Transverse colon (tissue), 4 donors: ENCODE measurements at regions of chr2 and their contacts with region 1.

Region 1: GRCh38 chr2:43773876-43774613 is at the start of gene DYNC2LI1:
- DNase-seq: peak; percentile 93
- H3K4me3 ChIP-seq: peak within 1 kb of the TSS; percentile 62 to 79 (median 66)
- H3K27ac ChIP-seq: peak within 1 kb of the TSS; percentile 91 to 95 (median 92)
- H3K4me1 ChIP-seq: peaks cover 0 to 13% (median 5%) of the 10 kb centered on the region in 4 donors
- H3K27me3 ChIP-seq: no peaks in the 10 kb centered on the region
- CTCF ChIP-seq: no peak
- EP300 ChIP-seq: no peak
- POLR2A ChIP-seq: peak; percentile 73
- total RNA-seq, gene DYNC2LI1: 6.6 to 26.9 (median 20.2) TPM

Region 2: DNA sequence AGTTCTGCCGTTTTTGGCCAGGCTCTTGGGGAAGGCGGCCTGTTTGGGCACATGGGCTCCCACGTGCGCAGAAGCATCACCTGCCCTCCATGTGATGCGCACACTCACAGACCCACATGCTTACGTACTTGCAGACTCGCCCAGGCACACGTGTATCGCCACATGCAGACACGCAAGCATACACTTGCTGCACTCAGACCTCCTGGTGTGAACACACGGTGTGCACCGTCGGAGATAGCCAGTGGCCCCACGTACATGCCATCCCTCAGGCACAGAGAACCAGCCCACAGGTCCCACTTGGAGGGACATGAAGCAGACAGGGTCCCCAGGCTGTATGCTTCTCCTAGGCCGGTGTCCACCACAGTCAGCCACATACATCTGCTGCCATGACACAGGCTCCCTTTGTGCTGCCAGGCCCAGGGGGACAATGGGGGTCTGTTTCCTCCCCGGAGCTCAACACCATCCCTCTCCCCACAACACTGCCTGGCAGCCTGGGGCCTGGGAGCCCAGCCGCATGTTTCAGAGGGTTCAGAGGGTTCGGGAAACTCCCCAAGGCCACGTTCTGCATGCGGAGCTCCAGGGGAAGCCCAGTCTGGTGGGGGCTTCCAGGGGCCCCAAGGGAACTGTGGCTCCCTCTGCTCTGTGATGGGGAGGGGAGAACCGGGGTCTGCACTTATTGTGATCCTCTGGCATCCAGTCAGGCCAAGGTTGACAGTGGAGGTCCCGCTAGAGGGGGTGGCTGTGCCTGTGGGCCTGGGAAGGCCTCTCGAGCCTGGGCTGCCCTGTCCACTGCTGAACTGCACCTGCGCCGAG is 773.6 kb before region 1 on chr2:
- in situ Hi-C with region 1: no loop called
- intact Hi-C with region 1: loop called (anchors 10 kb)
- DNase-seq: no peak
- H3K4me3 ChIP-seq: no peak overlapping the region
- H3K27ac ChIP-seq: peak overlapping the region; percentile 72 to 86 (median 78)
- H3K4me1 ChIP-seq: peaks cover 6 to 44% (median 38%) of the 10 kb centered on the region in 4 donors
- H3K27me3 ChIP-seq: no peaks in the 10 kb centered on the region
- CTCF ChIP-seq: no peak
- EP300 ChIP-seq: no peak
- POLR2A ChIP-seq: no peak

Region 3: DNA sequence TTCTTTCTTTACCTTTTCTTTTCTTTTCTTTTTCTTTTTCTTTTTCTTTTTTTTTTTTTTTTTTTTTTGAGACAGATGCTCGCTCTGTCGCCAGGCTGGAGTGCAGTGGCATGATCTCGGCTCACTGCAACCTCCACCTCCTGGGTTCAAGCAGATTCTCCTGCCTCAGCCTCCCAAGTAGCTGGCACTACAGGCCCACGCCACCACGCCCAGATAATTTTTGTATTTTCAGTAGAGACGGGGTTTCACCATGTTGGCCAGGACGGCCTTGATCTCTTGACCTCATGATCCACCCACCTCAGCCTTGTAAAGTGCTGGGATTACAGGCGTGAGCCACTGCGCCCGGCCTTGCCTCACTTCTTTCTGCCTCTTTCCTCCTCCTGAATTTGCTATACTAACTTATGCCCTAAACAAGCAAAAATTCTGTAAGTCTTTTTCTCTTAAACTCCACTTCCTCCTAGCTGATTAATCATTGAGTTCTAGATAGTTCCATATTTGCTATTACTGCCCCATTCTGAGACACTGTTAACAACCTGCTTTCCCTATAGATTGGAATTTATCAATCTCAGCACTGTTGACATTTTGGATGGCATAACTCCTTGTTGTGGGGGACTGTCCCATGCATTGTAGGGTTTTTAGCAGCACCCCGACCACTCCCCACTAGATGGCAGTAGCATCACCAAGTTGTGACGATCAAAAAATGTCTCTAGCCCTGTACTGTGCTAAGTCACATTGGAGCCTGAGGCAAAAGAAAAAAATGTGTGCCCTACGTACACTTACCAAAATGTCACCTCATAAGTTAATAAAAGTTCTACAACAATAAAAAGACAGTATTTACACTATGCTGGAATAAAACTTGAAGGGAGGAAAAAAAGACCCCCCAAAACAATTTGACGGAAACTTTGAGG is 161.8 kb before region 1 on chr2:
- in situ Hi-C with region 1: no loop called
- intact Hi-C with region 1: loop called (anchors 10 kb)
- DNase-seq: peak; percentile 73
- H3K4me3 ChIP-seq: no peak overlapping the region
- H3K27ac ChIP-seq: peak overlapping the region in 2 of 4 donors; percentile 23 to 55
- H3K4me1 ChIP-seq: peaks cover 0 to 13% (median 2%) of the 10 kb centered on the region in 4 donors
- H3K27me3 ChIP-seq: no peaks in the 10 kb centered on the region
- CTCF ChIP-seq: peak; percentile 56 to 82 (median 76)
- EP300 ChIP-seq: no peak
- POLR2A ChIP-seq: no peak

Region 4: DNA sequence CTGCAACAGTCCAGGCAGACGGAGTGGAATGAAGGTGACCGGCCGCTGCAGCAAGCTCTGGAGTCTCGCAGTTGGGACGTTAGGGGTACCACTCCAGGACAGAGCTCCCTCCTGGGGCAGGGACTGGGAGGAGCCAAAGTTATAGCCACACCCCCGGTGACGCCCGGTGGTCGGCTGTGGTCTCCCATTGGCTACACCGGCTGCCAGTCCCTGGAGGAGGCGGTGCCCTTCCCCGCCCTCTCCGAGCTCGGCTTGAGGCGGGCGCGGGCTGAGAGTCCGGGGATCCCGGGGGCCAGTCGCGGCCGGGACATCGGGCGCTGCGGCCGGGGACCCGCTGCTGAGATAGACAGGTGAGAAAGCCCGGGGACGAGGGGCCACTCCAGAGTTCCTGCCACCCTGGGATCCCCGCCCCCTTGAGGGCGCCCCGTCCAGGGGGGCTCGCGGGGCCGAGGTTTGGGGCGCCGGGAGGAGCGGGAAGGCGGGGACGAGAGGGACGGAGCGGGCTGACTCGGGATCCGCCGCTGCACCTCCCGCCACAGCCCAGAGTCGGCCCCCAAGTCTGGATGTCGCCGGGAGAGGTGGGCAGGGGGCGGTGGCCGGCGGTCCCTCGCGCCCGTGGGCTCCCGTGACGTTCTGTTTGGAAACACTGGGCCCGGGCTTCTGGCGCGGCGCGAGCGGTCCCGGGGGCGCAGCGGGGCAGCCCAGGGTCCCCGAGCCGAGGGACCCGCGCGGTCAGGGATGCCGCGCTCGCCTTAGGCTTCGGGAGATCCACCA is 136.8 kb before region 1 on chr2 and contains the start of gene PLEKHH2:
- in situ Hi-C with region 1: loop called in 1 of 4 experiments (anchors 10 kb)
- intact Hi-C with region 1: no loop called
- DNase-seq: peak; percentile 91
- H3K4me3 ChIP-seq: peak within 1 kb of the TSS; percentile 51 to 91 (median 68)
- H3K27ac ChIP-seq: peak within 1 kb of the TSS; percentile 76 to 87 (median 82)
- H3K4me1 ChIP-seq: peaks cover 0 to 29% (median 9%) of the 10 kb centered on the region in 4 donors
- H3K27me3 ChIP-seq: peaks cover 30% of the 10 kb centered on the region
- CTCF ChIP-seq: no peak
- EP300 ChIP-seq: no peak
- POLR2A ChIP-seq: peak; percentile 64
- total RNA-seq, gene PLEKHH2: 7.2 to 32.4 (median 12.3) TPM